Right cardiac atrium (tissue), 5 donors: ENCODE measurements at regions of chr15 and their contacts with region 1.

Region 1: GRCh38 chr15:56491110-56491722 is 26.3 kb upstream of the MNS1 start:
- DNase-seq: peak; percentile 52 to 77 (median 63)
- ATAC-seq: peak; percentile 54 to 71
- H3K4me3 ChIP-seq: no peak overlapping the region
- H3K27ac ChIP-seq: no peak overlapping the region
- H3K4me1 ChIP-seq: no peaks in the 10 kb centered on the region
- H3K27me3 ChIP-seq: no peaks in the 10 kb centered on the region

Region 2: GRCh38 chr15:56295433-56295832 is 195.8 kb before region 1 on chr15:
- intact Hi-C with region 1: no loop called
- DNase-seq: no peak
- ATAC-seq: no peak
- H3K4me3 ChIP-seq: no peak overlapping the region
- H3K27ac ChIP-seq: no peak overlapping the region
- H3K4me1 ChIP-seq: no peaks in the 10 kb centered on the region
- H3K27me3 ChIP-seq: no peaks in the 10 kb centered on the region

Region 3: GRCh38 chr15:56957812-56958406 is 466.7 kb after region 1 on chr15:
- intact Hi-C with region 1: no loop called
- DNase-seq: no peak
- ATAC-seq: no peak
- H3K4me3 ChIP-seq: no peak overlapping the region
- H3K27ac ChIP-seq: no peak overlapping the region
- H3K4me1 ChIP-seq: peaks cover 3% of the 10 kb centered on the region
- H3K27me3 ChIP-seq: no peaks in the 10 kb centered on the region

Region 4: GRCh38 chr15:57138349-57138788 is 647.2 kb after region 1 on chr15:
- intact Hi-C with region 1: loop called in 1 of 4 experiments (anchors 10 kb)
- DNase-seq: no peak
- ATAC-seq: peak; percentile 76 to 86
- H3K4me3 ChIP-seq: peak overlapping the region; percentile 15
- H3K27ac ChIP-seq: no peak overlapping the region
- H3K4me1 ChIP-seq: peaks cover 2% of the 10 kb centered on the region
- H3K27me3 ChIP-seq: no peaks in the 10 kb centered on the region

Region 5: GRCh38 chr15:57213862-57214261 is 722.6 kb after region 1 on chr15:
- intact Hi-C with region 1: loop called in 1 of 4 experiments (anchors 5 kb)
- DNase-seq: no peak
- ATAC-seq: peak; percentile 61 to 77
- H3K4me3 ChIP-seq: no peak overlapping the region
- H3K27ac ChIP-seq: no peak overlapping the region
- H3K4me1 ChIP-seq: no peaks in the 10 kb centered on the region
- H3K27me3 ChIP-seq: no peaks in the 10 kb centered on the region

Region 6: DNA sequence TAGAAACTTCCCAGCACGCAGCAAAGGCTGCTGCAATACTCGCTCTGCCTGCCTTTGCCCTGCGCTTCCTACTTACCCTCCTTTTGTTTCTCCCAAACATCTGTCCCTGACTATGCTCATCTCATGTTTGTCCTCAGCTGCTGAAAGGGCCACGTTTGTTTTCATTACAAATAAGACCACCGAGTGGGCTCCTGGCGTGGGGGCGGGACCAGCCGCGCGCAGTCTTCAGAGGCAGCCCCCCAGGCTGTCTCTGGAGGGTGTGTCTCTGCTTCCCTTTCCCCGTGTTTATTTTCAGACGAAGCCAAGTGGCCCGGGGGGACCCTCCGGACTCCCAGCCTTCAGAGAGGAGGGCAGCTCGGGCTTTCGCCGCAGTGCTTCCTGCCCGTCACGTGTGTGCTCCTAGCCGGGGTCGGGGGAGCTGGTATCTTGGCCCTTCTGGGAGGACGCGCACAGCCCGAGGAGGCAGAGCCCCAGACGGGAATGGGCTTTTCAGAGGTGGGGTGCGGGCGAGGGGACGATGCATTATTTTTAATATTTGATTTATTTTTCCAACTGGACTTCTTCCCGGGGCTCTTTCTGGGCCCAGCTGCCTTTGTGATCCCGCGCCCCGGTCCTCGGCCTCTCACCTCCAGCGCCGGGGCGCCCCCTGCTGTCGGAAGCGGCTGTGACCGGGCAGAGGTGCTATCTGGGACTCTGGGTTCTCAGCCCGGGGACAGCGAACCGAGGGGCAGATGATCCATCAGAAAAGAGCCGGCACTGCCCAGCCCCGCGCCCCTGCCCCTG is 815.1 kb after region 1 on chr15:
- intact Hi-C with region 1: loop called in 2 of 4 experiments (anchors 5 to 10 kb)
- DNase-seq: peak; percentile 88 to 96 (median 96)
- ATAC-seq: peak; percentile 89
- H3K4me3 ChIP-seq: peak overlapping the region; percentile 55
- H3K27ac ChIP-seq: no peak overlapping the region
- H3K4me1 ChIP-seq: no peaks in the 10 kb centered on the region
- H3K27me3 ChIP-seq: no peaks in the 10 kb centered on the region

Region 7: GRCh38 chr15:57537072-57537471 is 1045.9 kb after region 1 on chr15:
- intact Hi-C with region 1: loop called in 1 of 4 experiments (anchors 10 kb)
- DNase-seq: peak; percentile 64 to 75 (median 73)
- ATAC-seq: peak; percentile 41 to 47
- H3K4me3 ChIP-seq: no peak overlapping the region
- H3K27ac ChIP-seq: no peak overlapping the region
- H3K4me1 ChIP-seq: peaks cover 5% of the 10 kb centered on the region
- H3K27me3 ChIP-seq: no peaks in the 10 kb centered on the region